A549 (cell line): ENCODE measurements at regions of chr5 and their contacts with region 1.

Region 1: DNA sequence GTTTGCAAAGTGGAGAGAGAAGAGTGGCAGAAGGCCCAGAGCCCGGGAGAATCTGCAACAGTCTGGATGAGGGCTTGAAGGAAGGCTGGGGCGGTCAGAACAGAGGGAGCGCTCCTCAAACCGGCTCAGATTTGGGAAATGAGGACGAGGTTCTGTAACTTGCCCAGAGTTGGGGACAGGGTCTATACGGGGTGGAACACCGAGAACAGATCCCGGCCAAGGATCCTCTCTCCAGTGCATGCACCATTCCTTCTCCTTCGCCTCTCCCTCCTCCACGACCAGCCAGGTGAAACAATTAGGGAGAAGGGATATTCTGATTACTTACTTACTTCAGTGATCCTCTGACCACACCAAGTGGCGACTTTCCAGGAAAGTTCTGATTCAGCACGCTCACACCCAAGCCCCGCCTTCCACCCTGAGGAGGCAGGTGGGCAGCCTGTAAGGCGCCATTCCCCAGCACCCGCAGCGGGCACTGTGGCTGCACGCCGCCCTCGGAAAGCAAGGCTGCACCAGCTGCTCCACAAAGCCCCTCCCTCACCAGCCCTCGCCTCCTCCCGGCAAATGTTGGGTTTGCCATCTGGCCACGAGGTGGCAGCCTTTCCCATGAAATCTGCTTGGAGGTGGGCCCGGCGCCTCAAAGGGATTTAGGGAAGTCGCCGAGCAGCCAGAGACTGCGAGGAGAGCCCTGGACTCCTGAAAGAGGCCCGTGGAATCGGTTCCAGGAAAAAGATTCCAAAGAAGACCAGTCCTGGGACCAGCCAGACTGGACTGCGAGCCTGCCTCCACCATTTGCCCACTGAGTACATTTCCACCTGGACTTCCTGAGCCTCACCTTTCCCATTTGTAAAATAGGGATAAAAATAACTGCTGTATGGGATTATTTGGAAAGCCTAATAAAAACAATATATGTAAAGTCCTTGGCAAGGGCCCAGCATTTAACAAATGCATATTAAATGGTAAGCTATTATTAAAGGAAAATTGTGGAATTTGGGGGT is 22.2 kb upstream of the WWC1 start:
- DNase-seq: peak; percentile 90 to 91
- ATAC-seq: peak; percentile 85 to 94
- H3K4me3 ChIP-seq: peak overlapping the region; percentile 42
- H3K27ac ChIP-seq: peak overlapping the region; percentile 78 to 87
- H3K4me1 ChIP-seq: peaks cover 26% of the 10 kb centered on the region
- CTCF ChIP-seq: peak; percentile 92
- EP300 ChIP-seq: no peak
- POLR2A ChIP-seq: peak; percentile 23; the same call in 1 of the 2 replicates
- RAD21 ChIP-seq: peak; percentile 99

Region 2: DNA sequence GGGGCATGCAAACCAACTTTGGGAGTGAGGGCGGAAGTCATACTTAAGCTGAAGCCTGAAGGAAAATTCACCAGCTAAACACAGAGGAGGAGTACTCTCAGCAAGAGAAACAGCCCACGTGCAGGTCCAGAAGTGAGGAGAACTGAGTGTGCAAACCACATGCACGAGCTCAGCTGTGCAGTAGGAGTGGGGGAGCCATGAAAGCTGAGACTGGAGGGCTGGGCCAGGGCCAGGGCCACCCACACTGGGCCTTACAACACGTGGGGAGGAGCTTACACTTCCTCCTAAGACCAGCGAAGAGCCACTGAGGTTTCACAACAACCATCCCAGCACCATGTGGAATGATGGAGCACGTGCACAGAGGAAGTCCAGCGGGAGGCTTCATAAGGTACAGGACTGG is 12.9 kb after region 1 on chr5:
- CTCF ChIA-PET with region 1: interaction called, 19 read pairs
- POLR2A ChIA-PET with region 1: no interaction called
- DNase-seq: peak in 1 of 2 experiments; percentile 48
- ATAC-seq: peak; percentile 58 to 75; a peak in 5 of 6 replicates
- H3K4me3 ChIP-seq: no peak overlapping the region
- H3K27ac ChIP-seq: peak overlapping the region in 1 of 2 experiments; percentile 68; a peak in 4 of 6 replicates
- H3K4me1 ChIP-seq: peaks cover 9% of the 10 kb centered on the region
- CTCF ChIP-seq: no peak
- EP300 ChIP-seq: no peak
- POLR2A ChIP-seq: no peak
- RAD21 ChIP-seq: no peak

Region 3: GRCh38 chr5:168301593-168302388 is 32.5 kb after region 1 on chr5:
- CTCF ChIA-PET with region 1: interaction called, 19 read pairs
- POLR2A ChIA-PET with region 1: interaction called, 3 read pairs
- DNase-seq: peak; percentile 91 to 96
- ATAC-seq: peak; percentile 83 to 84
- H3K4me3 ChIP-seq: peak overlapping the region; percentile 22; the same call in 2 of the 3 replicates
- H3K27ac ChIP-seq: peak overlapping the region; percentile 91 to 92
- H3K4me1 ChIP-seq: peaks cover 98% of the 10 kb centered on the region
- CTCF ChIP-seq: no peak
- EP300 ChIP-seq: peak in 1 of 2 experiments; percentile 82; a peak in 3 of 5 replicates
- POLR2A ChIP-seq: no peak
- RAD21 ChIP-seq: peak in 1 of 2 experiments; percentile 9; a peak in 3 of 5 replicates

Region 4: DNA sequence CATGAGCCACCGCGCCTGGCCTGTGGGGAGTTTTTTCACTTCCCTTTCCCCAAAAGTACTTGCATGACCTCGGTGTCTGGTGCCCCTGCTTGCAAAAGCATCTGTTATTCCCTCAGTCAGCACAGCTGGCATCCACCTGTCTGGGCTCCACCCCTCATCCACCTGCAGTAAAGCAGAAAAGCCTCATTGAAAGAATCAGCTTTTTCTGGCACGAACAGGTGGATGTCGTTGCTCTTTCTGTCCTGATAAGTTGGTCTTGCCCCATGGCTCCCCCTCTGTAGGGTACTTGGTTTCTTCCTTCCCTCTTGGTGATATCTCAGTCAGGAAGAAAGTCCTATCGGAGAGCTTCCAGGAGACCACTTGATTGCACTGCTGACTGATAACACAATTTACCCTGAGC is 59.6 kb after region 1 on chr5:
- CTCF ChIA-PET with region 1: interaction called, 16 read pairs
- POLR2A ChIA-PET with region 1: no interaction called
- DNase-seq: peak; percentile 71 to 89
- ATAC-seq: peak; percentile 59 to 67
- H3K4me3 ChIP-seq: peak overlapping the region; percentile 20; the same call in 1 of the 3 replicates
- H3K27ac ChIP-seq: peak overlapping the region; percentile 98 to 99
- H3K4me1 ChIP-seq: peaks cover 98% of the 10 kb centered on the region
- CTCF ChIP-seq: no peak
- EP300 ChIP-seq: no peak
- POLR2A ChIP-seq: no peak
- RAD21 ChIP-seq: no peak

Region 5: DNA sequence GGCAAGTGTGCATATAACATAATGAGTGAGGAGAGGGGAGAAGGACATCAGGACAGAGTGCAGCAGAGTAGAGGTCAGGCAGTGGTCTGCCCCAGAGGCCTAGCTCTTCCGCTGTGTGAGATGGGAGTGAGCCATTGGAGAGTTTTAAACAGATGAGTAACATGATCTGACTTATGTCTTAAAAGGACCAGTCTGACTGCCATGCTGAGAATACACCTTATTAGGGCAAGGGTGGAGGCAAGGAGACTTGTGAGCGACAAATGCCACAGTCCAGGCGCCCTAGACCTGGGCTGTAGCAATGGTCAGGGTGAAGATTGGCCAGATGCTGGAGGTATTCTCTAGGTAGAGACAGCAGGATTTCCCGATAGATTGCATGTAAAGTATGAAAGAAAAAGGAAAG is 105.3 kb after region 1 on chr5:
- CTCF ChIA-PET with region 1: interaction called, 10 read pairs
- POLR2A ChIA-PET with region 1: no interaction called
- DNase-seq: no peak
- ATAC-seq: peak; percentile 19 to 53; a peak in 4 of 6 replicates
- H3K4me3 ChIP-seq: no peak overlapping the region
- H3K27ac ChIP-seq: peak overlapping the region in 1 of 2 experiments; percentile 8; a peak in 1 of 6 replicates
- H3K4me1 ChIP-seq: peaks cover 26% of the 10 kb centered on the region
- CTCF ChIP-seq: no peak
- EP300 ChIP-seq: no peak
- POLR2A ChIP-seq: no peak
- RAD21 ChIP-seq: no peak

Region 6: DNA sequence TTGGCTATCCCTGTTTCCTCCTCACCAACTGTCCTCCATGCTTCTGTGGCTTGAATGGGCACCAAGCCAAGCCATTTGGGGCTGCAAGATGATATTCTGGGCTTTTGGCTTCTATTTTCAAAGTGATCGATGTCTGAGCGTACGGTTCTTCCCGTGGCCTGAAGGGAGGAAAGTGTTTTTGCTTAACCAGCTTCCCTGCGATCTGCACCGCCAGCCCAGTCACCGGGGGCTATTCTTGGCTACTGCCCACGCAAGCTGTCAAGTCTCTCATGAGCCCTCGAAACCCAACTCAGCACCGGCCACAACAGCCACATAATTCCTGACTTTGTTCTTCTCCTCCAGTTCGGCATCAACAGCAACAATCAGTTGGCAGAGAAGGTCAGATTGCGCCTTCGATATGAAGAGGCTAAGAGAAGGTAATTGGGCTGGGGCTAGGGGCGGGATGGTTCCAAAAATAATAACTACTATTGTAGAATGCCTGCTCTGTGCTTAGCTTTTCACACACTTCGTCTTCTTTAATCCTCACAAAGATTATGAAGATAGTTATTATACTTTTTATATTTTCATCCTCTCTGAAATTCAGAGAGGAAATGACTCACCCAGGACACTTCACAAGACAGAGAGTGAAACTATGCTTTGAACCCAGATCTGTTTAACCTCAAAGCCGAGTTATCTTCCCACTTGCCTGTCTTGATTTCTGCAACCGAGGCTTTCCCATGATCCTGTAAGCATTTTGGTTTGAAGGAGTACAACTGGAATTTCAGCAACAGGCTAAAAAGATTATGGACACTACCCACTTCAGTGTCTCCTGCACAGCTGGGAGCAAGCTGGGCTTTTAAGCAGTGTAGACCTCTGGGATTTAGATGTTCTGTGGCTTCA is 140.6 kb after region 1 on chr5:
- CTCF ChIA-PET with region 1: interaction called, 28 read pairs
- POLR2A ChIA-PET with region 1: no interaction called
- DNase-seq: no peak
- ATAC-seq: peak in 1 of 2 experiments; percentile 10; a peak in 2 of 6 replicates
- H3K4me3 ChIP-seq: no peak overlapping the region
- H3K27ac ChIP-seq: peak overlapping the region; percentile 56 to 77
- H3K4me1 ChIP-seq: peaks cover 29% of the 10 kb centered on the region
- CTCF ChIP-seq: no peak
- EP300 ChIP-seq: no peak
- POLR2A ChIP-seq: no peak
- RAD21 ChIP-seq: no peak

Region 7: DNA sequence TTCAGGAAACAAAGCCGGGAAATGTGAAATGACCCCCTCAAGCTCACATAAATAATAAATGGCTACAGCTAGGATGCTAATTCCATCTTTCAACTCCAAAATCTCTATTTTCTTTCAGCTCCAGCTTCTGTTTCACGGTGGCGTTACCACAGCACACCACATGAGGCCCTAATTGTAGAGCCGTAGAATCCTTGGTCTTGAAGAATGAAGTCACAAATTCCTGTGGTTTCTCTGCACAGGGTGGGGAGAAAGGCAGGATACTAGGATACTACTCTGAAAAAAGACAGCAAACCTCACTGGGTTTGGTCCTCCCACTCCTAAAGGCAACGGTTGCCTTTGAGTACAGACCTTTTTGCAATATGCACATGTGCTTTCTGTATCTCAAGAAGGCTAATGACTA is 203.1 kb after region 1 on chr5:
- CTCF ChIA-PET with region 1: interaction called, 17 read pairs
- POLR2A ChIA-PET with region 1: no interaction called
- DNase-seq: peak in 1 of 2 experiments; percentile 23
- ATAC-seq: peak; percentile 59 to 60; a peak in 3 of 6 replicates
- H3K4me3 ChIP-seq: no peak overlapping the region
- H3K27ac ChIP-seq: no peak overlapping the region
- H3K4me1 ChIP-seq: no peaks in the 10 kb centered on the region
- CTCF ChIP-seq: no peak
- EP300 ChIP-seq: no peak
- POLR2A ChIP-seq: no peak
- RAD21 ChIP-seq: no peak